ENCODE measurements at regions of chr2 and their contacts with region 1.

Region 1: GRCh38 chr2:120693121-120693520 is 42.5 kb upstream of the GLI2 start:
- DNase-seq: no peak
- H3K4me3 ChIP-seq: no peak overlapping the region
- H3K27ac ChIP-seq: no peak overlapping the region
- H3K4me1 ChIP-seq: peaks cover 0 to 2% of the 10 kb centered on the region in 2 experiments; a peak in 1 of 4 replicates
- H3K27me3 ChIP-seq: no peaks in the 10 kb centered on the region; the same call in 1 of the 2 replicates
- CTCF ChIP-seq: no peak
- EP300 ChIP-seq: no peak
- RAD21 ChIP-seq: no peak

Region 2: DNA sequence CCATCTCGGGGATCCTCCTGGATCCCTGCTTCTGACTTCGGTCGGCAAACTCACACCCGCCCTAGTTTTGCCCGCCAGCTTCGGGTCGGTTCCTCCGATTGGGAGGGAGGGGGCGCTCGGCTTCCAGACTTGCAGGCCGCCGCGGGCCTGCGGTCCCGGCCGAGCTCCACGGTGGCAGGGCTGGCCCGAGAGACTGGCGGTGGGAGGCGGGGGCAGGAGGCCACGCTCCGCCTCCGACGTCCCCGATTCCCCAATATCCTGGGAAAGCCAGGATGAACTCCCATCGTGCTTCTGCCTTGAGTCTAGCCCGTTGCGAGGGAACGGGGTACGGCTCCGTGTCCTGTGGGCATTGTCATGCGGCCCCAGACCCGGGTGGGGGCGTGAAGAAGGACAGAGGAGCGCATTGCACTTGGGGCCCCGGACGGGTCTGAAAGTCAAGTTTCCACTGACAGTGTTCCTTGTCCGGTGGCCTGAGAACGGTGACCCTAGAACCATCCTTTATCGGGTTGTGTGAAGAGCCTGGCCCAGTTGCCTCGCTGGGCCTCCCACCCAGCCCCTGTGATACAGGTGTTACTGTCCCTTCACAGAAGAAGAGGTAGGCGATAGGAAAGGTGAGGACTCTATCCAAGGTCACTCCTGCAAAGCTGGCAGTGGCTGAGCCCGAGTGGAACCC is 349.6 kb before region 1 on chr2:
- CTCF ChIA-PET with region 1: interaction called, 10 read pairs
- POLR2A ChIA-PET with region 1: no interaction called
- DNase-seq: peak; percentile 92
- H3K4me3 ChIP-seq: peak overlapping the region in 1 of 2 experiments; percentile 46; a peak in 2 of 4 replicates
- H3K27ac ChIP-seq: no peak overlapping the region
- H3K4me1 ChIP-seq: peaks cover 0 to 14% of the 10 kb centered on the region in 2 experiments; a peak in 1 of 4 replicates
- H3K27me3 ChIP-seq: peaks cover 64% of the 10 kb centered on the region
- CTCF ChIP-seq: peak; percentile 70
- EP300 ChIP-seq: no peak
- RAD21 ChIP-seq: peak; percentile 88

Region 3: DNA sequence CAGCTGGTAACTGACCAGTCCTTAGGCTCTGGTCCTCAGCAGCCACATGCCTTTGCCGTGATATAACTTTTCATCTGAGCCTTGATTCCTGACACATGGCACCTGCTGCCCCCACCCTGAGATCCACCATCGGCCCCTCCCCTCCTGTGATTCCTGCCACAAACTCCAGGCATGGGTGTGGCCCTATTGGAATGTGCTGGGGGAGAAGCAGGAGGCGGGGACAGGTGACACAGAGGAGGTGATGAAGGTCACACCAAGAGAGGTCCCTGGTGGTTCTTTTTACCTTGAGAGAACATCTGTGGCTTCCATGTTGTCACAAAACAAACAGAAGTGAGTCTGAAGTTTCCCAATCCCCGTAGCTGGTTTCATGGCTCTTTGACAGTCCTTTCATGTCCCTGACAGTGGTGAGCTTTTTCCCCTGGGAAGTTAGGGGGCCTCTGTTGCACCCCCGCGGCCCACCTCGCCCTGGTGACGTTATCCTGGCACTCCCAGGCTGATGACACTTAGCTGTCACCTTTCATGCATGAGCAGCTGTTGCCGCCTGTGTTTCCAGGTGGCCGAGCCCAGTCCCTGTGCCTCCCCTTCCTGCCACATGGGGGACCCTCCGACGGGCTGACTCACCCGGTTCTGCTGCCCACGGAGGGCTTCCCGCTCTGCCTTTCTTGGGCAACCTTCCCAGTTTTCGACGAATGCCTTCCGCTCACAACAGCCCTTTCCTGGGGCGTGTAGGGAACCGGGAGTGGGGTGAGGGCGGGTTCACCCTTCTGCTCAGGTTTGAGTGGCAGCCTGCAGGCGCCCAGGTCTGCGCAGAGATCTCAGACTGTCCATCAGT is 23.8 kb before region 1 on chr2:
- CTCF ChIA-PET with region 1: no interaction called
- POLR2A ChIA-PET with region 1: no interaction called
- DNase-seq: peak; percentile 75
- H3K4me3 ChIP-seq: peak overlapping the region in 1 of 2 experiments; percentile 6; a peak in 1 of 4 replicates
- H3K27ac ChIP-seq: no peak overlapping the region
- H3K4me1 ChIP-seq: peaks cover 0 to 12% of the 10 kb centered on the region in 2 experiments; a peak in 1 of 4 replicates
- H3K27me3 ChIP-seq: no peaks in the 10 kb centered on the region; the same call in 1 of the 2 replicates
- CTCF ChIP-seq: no peak
- EP300 ChIP-seq: no peak
- RAD21 ChIP-seq: no peak

Region 4: GRCh38 chr2:120712180-120712681 is 19.1 kb after region 1 on chr2:
- CTCF ChIA-PET with region 1: interaction called, 26 read pairs
- POLR2A ChIA-PET with region 1: no interaction called
- DNase-seq: peak; percentile 46
- H3K4me3 ChIP-seq: no peak overlapping the region
- H3K27ac ChIP-seq: no peak overlapping the region
- H3K4me1 ChIP-seq: peaks cover 0 to 28% of the 10 kb centered on the region in 2 experiments; a peak in 1 of 4 replicates
- H3K27me3 ChIP-seq: no peaks in the 10 kb centered on the region
- CTCF ChIP-seq: no peak
- EP300 ChIP-seq: peak in 1 of 2 experiments; percentile 59; a peak in 2 of 4 replicates
- RAD21 ChIP-seq: no peak

Region 5: GRCh38 chr2:120881981-120882788 is 189.1 kb after region 1 on chr2:
- CTCF ChIA-PET with region 1: interaction called, 11 read pairs
- POLR2A ChIA-PET with region 1: interaction called, 3 read pairs
- DNase-seq: peak; percentile 90
- H3K4me3 ChIP-seq: no peak overlapping the region
- H3K27ac ChIP-seq: peak overlapping the region in 1 of 2 experiments; percentile 50; a peak in 2 of 4 replicates
- H3K4me1 ChIP-seq: peaks cover 0 to 43% of the 10 kb centered on the region in 2 experiments; a peak in 2 of 4 replicates
- H3K27me3 ChIP-seq: no peaks in the 10 kb centered on the region
- CTCF ChIP-seq: no peak
- EP300 ChIP-seq: peak in 1 of 2 experiments; percentile 89; a peak in 2 of 4 replicates
- RAD21 ChIP-seq: no peak; the same call in 1 of the 2 replicates

Region 6: GRCh38 chr2:120953066-120953756 is 260.1 kb after region 1 on chr2:
- CTCF ChIA-PET with region 1: interaction called, 10 read pairs
- POLR2A ChIA-PET with region 1: no interaction called
- DNase-seq: no peak
- H3K4me3 ChIP-seq: no peak overlapping the region
- H3K27ac ChIP-seq: no peak overlapping the region
- H3K4me1 ChIP-seq: peaks cover 4 to 47% of the 10 kb centered on the region in 2 experiments; a peak in 1 of 4 replicates
- H3K27me3 ChIP-seq: no peaks in the 10 kb centered on the region
- CTCF ChIP-seq: no peak
- EP300 ChIP-seq: no peak
- RAD21 ChIP-seq: no peak

Region 7: DNA sequence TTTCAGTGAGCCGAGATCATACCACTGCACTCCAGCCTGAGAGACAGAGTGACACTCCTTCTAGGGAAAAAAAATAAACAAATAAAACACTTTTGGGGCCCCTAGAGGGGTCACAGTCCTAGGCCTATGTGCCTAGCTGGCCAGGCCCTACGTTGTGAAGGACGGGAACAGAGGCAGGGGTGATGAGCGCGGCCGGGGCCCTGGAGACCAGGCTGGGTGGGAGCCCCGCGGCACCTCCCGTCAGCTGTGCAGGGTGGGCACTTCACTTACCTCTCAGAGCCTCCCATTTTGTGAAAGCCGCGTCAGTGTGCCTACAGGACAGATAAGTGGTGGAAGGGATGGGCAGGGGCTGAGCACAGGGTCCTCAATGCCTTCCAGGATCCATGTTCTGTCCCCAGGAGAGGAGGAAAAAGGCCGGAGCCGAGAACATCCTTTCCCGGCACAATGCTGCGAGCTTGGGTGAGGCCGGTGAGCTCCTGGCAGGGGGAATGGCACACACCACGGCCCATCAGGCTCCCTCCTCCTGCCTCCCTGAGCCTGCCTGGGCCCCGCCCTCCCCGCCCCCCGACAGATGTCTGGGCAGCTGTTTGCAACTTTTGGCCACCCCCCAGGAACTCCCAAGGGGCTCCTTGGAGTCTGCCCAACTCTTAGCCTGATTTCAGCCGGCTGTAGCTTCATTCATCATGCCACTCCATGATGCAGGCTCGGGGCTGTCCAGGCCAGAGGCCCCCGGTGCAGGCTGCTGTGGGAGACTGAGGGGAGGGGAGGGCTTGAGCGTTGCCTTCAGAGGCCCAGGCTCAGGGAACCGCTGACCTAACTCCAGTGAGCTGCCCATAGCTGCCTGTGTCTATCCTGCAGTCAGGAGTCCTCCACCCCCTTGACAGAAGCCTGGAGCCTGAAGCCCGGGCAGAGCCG is 395.4 kb after region 1 on chr2:
- CTCF ChIA-PET with region 1: interaction called, 408 read pairs
- POLR2A ChIA-PET with region 1: no interaction called
- DNase-seq: no peak
- H3K4me3 ChIP-seq: no peak overlapping the region
- H3K27ac ChIP-seq: no peak overlapping the region
- H3K4me1 ChIP-seq: no peaks in the 10 kb centered on the region; a peak in 1 of 4 replicates
- H3K27me3 ChIP-seq: no peaks in the 10 kb centered on the region
- CTCF ChIP-seq: no peak
- EP300 ChIP-seq: no peak
- RAD21 ChIP-seq: no peak

Measured in SK-N-SH (cell line).